WTC11 (cell line): ENCODE measurements at regions of chr11 and their contacts with region 1.

Region 1: DNA sequence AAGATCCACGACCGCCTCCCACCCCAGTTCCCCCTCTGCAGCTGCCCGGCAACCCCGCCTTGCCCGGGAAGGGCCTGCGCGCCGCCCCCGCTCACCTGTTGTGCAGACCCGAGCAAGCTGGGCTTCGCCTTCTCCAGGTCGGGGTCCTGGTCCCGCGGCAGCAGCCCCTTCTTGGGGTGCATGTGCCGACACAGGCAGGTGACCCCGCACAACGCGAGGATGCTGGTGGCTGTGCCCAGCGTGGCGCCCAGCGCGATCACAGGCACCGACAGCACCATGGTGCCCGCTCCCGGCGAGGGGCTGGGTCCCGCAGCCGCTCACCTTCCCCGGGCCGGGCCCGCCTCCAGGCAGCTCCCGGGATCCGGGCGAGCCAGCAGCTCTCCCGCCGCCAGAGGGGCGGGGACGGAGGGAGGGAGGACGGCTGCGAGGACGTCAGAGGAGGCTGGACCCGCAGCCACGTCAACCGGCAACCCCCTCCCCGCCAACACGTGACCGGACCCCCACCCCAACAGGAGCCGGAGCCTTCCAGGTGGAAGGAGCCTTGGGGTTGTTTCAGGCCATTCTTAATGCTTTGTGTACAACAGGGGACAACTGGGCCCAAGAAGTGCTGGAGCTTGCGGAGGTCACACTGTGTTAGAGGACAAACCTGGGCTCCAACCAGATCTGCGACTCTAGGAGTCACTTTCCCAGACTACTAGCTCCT is at the start of gene SYT13:
- DNase-seq: peak; percentile 89
- ATAC-seq: peak; percentile 92
- H3K4me3 Mint-ChIP-seq: peak within 1 kb of the TSS; percentile 72
- H3K27ac Mint-ChIP-seq: 0 out of 2 replicates have a peak within 1 kb of the TSS, but pooled peaks have one; percentile 3
- H3K4me1 Mint-ChIP-seq: peaks cover 20% of the 10 kb centered on the region
- H3K27me3 Mint-ChIP-seq: peaks cover 75% of the 10 kb centered on the region
- CTCF ChIP-seq: no peak
- total RNA-seq, gene SYT13: 10.8 to 15.1 TPM (median 12.0 TPM) in 3 replicates

Region 2: DNA sequence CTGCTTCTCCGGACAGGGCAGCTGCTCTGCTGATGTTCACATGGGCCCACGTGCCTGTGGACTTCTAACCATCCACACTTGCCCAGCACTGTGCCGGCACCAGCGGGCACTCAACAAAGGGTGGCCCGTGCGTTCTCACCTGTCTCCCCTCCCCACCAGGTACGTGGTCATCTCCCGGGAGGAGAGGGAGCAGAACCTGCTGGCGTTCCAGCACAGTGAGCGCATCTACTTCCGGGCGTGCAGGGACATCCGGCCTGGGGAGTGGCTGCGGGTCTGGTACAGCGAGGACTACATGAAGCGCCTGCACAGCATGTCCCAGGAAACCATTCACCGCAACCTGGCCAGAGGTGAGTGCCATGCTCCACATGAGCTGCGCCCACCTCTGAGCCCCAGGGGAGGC is 66.7 kb before region 1 on chr11:
- CTCF ChIA-PET with region 1: no interaction called
- POLR2A ChIA-PET with region 1: no interaction called
- DNase-seq: no peak
- ATAC-seq: no peak
- H3K4me3 Mint-ChIP-seq: no peak overlapping the region
- H3K27ac Mint-ChIP-seq: no peak overlapping the region
- H3K4me1 Mint-ChIP-seq: no peaks in the 10 kb centered on the region
- H3K27me3 Mint-ChIP-seq: no peaks in the 10 kb centered on the region; the same call in 1 of the 2 replicates
- CTCF ChIP-seq: no peak

Region 3: DNA sequence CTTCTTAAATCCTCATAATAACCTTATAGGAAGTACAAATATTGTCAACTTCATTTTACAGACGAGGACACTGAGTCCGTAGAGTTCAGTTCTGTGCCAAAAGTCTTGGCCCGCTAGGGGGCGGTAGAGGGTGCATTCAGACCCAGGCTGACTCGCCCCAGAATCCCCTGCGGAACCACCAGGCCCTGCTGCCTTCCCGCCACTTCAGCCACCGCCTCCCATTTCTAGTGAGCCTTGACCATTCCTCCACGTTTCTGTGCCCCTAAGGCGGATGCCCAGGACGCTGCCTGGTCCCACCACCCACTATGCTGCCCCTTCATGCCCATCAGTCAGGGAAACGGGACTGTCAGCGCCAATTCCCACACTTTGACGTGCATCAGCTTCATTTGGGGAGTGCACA is 19.0 kb before region 1 on chr11:
- CTCF ChIA-PET with region 1: interaction called, 17 read pairs
- POLR2A ChIA-PET with region 1: no interaction called
- DNase-seq: peak; percentile 86
- ATAC-seq: peak; percentile 92
- H3K4me3 Mint-ChIP-seq: no peak overlapping the region
- H3K27ac Mint-ChIP-seq: no peak overlapping the region
- H3K4me1 Mint-ChIP-seq: no peaks in the 10 kb centered on the region
- H3K27me3 Mint-ChIP-seq: peaks cover 19% of the 10 kb centered on the region
- CTCF ChIP-seq: peak; percentile 87

Region 4: GRCh38 chr11:45339729-45340519 is 53.8 kb after region 1 on chr11:
- CTCF ChIA-PET with region 1: interaction called, 18 read pairs
- POLR2A ChIA-PET with region 1: no interaction called
- DNase-seq: peak; percentile 98
- ATAC-seq: peak; percentile 99
- H3K4me3 Mint-ChIP-seq: peak overlapping the region; percentile 58
- H3K27ac Mint-ChIP-seq: peak overlapping the region; percentile 26; the same call in 1 of the 2 replicates
- H3K4me1 Mint-ChIP-seq: peaks cover 40% of the 10 kb centered on the region
- H3K27me3 Mint-ChIP-seq: no peaks in the 10 kb centered on the region; the same call in 1 of the 2 replicates
- CTCF ChIP-seq: peak; percentile 95